MCF 10A (cell line): ENCODE measurements at regions of chr11 and their contacts with region 1.

Region 1: DNA sequence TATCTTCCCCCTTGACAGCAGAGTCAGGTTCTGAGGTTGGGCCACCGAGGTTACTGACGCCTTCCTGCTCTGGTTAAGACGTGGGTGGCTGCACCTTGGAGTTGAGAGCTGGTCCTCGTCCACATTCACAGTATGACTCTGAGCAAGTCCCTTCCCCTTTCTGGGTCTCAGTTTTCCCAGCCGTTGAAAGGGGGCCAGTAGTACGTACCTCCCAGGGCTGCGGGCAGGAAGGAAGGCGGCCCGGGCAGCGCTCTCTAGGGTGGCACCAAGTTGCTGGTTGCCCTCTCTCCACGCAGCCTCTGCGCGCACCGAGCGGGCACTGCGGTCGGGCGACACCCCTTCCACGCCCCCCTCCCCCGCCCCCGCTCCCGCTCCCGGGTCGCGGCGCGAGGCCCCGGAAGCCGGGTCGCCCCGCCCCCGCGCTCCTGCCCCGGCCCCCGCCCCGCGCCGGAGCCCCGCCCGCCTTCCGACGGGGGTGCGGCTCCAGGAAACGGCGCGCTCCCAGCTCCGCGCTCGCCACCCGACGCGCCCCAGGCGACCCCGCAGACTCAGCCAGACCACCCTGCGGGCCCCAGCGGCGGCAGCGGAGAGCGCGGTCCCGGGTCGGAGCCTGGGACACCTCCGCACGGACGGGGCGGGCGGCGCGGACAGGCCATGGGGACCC is at the start of gene EHBP1L1:
- DNase-seq: peak; percentile 65
- H3K4me3 Mint-ChIP-seq: peak within 1 kb of the TSS; percentile 97
- H3K27ac Mint-ChIP-seq: peak within 1 kb of the TSS; percentile 90
- H3K4me1 Mint-ChIP-seq: peaks cover 40% of the 10 kb centered on the region
- H3K27me3 Mint-ChIP-seq: no peaks in the 10 kb centered on the region
- CTCF ChIP-seq: no peak
- total RNA-seq, gene EHBP1L1: 31.3 and 40.6 TPM in 2 replicates

Region 2: GRCh38 chr11:65398362-65398910 is 177.3 kb before region 1 on chr11:
- CTCF ChIA-PET with region 1: no interaction called
- POLR2A ChIA-PET with region 1: no interaction called
- intact Hi-C with region 1: no loop called
- DNase-seq: no peak
- H3K4me3 Mint-ChIP-seq: no peak overlapping the region
- H3K27ac Mint-ChIP-seq: peak overlapping the region; percentile 51
- H3K4me1 Mint-ChIP-seq: no peaks in the 10 kb centered on the region
- H3K27me3 Mint-ChIP-seq: no peaks in the 10 kb centered on the region
- CTCF ChIP-seq: no peak

Region 3: DNA sequence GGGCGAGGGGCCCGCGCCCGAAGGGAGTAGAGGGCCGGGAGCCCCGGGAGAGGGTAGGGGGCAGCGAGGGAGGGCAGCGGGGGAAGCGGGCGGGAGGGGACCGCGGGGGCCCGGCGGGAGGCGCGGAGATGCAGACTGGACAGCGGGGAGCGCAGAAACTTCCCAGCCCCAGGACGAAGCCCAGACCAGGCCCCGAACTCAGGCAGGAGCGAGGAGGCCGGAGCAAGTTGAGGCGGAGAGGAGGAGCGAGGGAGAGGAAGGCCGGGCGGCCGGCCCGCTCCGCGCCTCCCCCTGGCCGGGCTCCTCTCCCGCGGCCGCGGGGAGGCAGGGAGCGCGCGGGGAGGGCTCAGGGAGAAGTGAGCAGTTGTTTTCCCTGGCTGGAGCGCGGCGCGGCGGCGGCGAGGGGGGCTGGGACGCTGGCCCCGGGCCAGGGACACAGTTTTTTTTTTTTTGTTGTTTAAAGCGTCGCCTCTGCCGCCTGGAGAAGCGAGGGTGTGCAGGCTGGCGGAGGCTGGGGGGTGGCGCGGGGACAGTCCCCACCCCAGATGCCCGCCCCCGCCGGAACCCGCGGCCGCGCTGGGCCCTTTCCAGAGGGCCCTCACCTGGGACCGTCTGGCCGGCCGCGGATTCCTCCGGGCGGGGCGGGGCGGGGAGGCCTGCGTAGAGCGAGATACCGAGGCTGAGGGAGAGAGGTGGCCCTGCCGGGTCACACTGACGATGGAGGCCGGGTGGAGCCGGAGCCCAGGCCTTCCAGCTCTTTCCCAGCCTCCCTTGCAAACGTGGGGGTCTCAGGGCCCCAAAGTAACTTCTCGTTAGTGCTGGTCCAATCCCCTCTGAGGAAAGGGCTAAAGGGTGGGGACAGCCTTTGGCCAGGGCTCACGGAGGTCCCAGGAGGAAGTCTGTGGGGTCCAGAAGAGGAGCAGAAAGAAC is 17.4 kb before region 1 on chr11 and contains the start of gene LTBP3:
- CTCF ChIA-PET with region 1: interaction called, 35 read pairs
- POLR2A ChIA-PET with region 1: interaction called, 24 read pairs
- intact Hi-C with region 1: no loop called
- DNase-seq: peak; percentile 87
- H3K4me3 Mint-ChIP-seq: peak within 1 kb of the TSS; percentile 66
- H3K27ac Mint-ChIP-seq: no peak within 1 kb of the TSS
- H3K4me1 Mint-ChIP-seq: peaks cover 47% of the 10 kb centered on the region
- H3K27me3 Mint-ChIP-seq: no peaks in the 10 kb centered on the region
- CTCF ChIP-seq: no peak
- total RNA-seq, gene LTBP3: 10.6 and 11.0 TPM in 2 replicates

Region 4: DNA sequence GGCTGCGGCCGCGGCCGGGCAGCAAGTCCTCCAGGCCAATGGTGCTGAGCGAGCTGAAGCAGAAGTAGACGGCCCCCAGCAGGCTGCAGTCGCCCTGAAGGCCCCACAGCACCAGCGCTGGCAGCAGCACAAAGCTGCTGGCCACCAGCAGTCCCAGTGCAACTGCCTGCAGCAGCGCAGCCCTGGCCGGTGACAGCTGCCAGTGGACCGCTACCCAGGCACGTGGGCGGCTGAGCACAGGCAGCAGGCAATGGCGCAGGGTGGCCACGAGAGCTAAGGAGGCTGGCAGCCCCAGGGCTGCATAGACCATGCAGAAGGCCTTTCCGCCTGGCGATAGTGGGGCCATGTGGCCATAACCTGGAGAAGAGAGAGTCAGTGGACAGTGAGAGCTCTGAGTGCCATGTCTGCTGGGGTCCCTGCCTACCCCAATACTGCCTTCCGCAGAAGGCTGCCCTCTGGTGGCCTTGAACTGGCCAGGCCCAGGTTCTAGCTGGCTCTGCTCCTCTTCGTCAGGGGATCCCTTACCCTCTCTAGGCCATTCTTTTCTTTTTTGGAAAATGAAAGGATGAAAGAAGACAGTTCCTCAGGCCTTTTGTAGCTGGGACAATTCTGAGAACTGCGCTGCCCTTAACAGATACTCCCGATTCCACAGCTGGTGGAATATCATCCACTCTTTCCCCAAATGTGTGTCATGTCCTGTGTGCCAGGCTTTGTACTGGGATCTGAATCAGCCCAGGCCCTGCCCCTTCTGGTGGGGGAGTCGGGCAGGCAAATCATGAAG is 18.0 kb after region 1 on chr11:
- CTCF ChIA-PET with region 1: interaction called, 10 read pairs
- POLR2A ChIA-PET with region 1: interaction called, 18 read pairs
- intact Hi-C with region 1: loop called (anchors 1 kb)
- DNase-seq: no peak
- H3K4me3 Mint-ChIP-seq: no peak overlapping the region
- H3K27ac Mint-ChIP-seq: no peak overlapping the region
- H3K4me1 Mint-ChIP-seq: peaks cover 5% of the 10 kb centered on the region
- H3K27me3 Mint-ChIP-seq: no peaks in the 10 kb centered on the region
- CTCF ChIP-seq: peak; percentile 56

Region 5: DNA sequence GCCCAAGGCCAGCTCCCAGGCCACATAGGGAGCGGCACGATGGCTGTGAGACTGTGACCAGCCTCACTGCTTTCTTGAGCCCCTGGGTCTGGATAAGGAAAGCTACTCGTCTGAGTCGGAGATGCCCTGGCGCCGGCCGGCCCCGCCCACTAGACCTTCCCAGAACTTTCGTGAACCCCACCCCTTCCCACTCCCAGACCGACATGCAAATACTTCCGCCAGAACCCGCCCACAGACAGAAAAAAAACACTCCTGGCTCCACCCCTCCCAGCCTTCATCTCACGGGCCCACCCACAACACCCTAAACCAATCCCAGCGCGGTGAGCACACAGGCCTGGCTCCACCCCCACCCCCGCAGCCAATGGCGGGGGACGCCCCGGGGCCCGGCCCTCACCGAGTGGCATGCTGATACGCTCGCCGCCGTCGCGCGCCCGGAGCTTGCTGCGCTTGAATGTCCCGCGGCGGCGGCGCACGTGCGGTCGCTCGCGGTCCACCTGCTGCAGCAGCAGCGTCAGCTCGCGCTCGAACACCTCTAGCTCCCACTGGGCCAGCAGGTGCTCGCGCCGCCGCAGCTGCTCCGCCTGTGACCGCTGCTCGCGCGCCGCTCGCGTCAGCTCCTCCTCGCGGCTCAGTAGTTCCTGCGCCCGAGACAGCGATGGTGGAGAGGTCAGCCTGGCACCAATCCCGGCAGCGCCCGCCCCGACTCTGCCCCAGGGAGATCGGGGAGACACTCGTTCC is 31.3 kb after region 1 on chr11:
- CTCF ChIA-PET with region 1: interaction called, 7 read pairs
- POLR2A ChIA-PET with region 1: interaction called, 103 read pairs
- intact Hi-C with region 1: no loop called
- DNase-seq: no peak
- H3K4me3 Mint-ChIP-seq: no peak overlapping the region
- H3K27ac Mint-ChIP-seq: no peak overlapping the region
- H3K4me1 Mint-ChIP-seq: peaks cover 24% of the 10 kb centered on the region
- H3K27me3 Mint-ChIP-seq: no peaks in the 10 kb centered on the region
- CTCF ChIP-seq: no peak

Region 6: DNA sequence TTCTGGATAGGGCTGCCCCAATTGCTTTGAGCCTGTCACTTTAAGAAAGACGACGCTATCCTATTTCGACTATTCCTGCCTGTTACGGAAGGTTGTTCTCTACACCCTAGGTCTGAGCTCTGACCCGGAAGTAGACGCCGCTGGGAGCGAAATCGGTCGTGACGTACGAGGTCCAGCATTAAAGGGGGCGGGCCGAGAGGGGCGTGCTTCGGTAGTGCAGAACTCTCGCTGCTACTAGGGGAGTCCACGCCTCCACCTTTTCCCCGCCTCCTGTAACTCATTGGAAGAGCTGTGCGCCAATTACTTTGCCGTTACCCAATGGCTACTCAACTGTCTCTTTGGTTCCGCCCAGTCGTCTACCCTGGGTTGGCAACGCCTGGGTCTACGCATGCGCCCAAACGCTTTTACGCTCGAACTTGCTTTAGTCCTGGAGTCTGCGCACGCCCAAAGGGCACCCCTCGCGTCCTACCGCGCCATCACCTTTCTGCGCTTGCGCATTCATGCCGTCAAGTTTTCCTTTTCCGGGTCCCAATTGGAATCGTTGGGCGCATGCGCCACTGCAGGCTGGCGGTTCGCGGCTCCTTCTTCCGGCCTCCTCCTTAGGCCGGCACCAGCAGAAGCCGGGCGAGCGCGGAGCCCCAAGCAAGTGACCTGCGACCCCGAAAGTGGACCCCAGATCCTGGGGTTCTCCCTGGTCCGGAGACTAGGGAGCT is 39.7 kb after region 1 on chr11 and contains the start of gene PCNX3:
- CTCF ChIA-PET with region 1: interaction called, 11 read pairs
- POLR2A ChIA-PET with region 1: interaction called, 103 read pairs
- intact Hi-C with region 1: loop called (anchors 1 kb)
- DNase-seq: peak; percentile 100
- H3K4me3 Mint-ChIP-seq: peak within 1 kb of the TSS; percentile 91
- H3K27ac Mint-ChIP-seq: peak within 1 kb of the TSS; percentile 96
- H3K4me1 Mint-ChIP-seq: peaks cover 26% of the 10 kb centered on the region
- H3K27me3 Mint-ChIP-seq: no peaks in the 10 kb centered on the region
- CTCF ChIP-seq: no peak
- total RNA-seq, gene PCNX3: 40.9 and 45.8 TPM in 2 replicates